ENCODE measurements at regions of chr3 and their contacts with region 1.

Region 1: GRCh38 chr3:163218336-163218735 is 1721.7 kb downstream of the OTOL1 start:
- DNase-seq: no peak
- H3K4me3 ChIP-seq: no peak overlapping the region
- H3K27ac ChIP-seq: no peak overlapping the region
- H3K4me1 ChIP-seq: no peaks in the 10 kb centered on the region
- H3K27me3 ChIP-seq: no peaks in the 10 kb centered on the region
- CTCF ChIP-seq: no peak

Region 2: GRCh38 chr3:163196815-163197374 is 21.4 kb before region 1 on chr3:
- CTCF ChIA-PET with region 1: no interaction called
- POLR2A ChIA-PET with region 1: interaction called, 12 read pairs
- intact Hi-C with region 1: no loop called
- DNase-seq: no peak
- H3K4me3 ChIP-seq: no peak overlapping the region
- H3K27ac ChIP-seq: no peak overlapping the region
- H3K4me1 ChIP-seq: no peaks in the 10 kb centered on the region
- H3K27me3 ChIP-seq: no peaks in the 10 kb centered on the region
- CTCF ChIP-seq: no peak

Measured in PC-9 (cell line).